ENCODE measurements at regions of chr2 and their contacts with region 1.

Region 1: DNA sequence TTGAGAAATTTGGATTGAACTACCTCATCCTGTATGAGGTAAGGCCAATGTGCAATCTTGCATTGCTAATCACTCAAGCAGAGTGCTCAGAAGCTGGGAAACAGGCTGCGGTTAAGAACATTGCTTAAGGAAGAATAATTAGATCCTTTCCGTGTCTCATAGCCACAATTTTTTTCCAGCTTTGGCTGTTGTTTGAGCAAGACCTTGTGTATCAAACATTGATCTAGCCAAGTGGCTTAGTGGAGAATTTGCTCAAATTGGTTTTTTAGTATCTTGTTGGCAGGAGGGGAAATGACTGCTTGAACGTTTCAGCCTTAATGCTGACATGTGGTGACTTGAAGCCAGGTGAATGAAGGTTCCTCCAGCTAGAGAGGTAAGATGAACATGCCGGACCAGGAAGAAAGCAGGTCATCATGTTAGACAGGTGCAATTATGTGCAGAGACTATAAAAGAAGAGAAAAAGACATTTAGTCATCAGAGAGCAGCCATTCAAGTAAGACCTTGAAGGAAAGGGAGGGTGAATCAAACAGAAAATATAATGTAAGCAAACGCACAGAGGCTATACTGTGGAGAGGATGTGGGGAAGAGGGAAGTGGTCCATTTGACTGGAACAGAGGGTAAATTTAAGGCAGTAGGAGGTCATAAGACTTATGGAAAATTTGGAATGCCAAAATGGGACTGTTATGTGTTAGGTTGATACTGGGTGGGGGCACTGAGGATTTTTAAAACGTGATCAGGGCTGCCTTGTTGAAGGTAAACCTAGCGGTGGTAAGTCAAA is 98.9 kb upstream of the CYP1B1 start:
- DNase-seq: peak; percentile 96
- H3K4me3 ChIP-seq: no peak overlapping the region
- H3K27ac ChIP-seq: no peak overlapping the region
- H3K4me1 ChIP-seq: peaks cover 38% of the 10 kb centered on the region
- H3K27me3 ChIP-seq: no peaks in the 10 kb centered on the region
- CTCF ChIP-seq: no peak

Region 2: DNA sequence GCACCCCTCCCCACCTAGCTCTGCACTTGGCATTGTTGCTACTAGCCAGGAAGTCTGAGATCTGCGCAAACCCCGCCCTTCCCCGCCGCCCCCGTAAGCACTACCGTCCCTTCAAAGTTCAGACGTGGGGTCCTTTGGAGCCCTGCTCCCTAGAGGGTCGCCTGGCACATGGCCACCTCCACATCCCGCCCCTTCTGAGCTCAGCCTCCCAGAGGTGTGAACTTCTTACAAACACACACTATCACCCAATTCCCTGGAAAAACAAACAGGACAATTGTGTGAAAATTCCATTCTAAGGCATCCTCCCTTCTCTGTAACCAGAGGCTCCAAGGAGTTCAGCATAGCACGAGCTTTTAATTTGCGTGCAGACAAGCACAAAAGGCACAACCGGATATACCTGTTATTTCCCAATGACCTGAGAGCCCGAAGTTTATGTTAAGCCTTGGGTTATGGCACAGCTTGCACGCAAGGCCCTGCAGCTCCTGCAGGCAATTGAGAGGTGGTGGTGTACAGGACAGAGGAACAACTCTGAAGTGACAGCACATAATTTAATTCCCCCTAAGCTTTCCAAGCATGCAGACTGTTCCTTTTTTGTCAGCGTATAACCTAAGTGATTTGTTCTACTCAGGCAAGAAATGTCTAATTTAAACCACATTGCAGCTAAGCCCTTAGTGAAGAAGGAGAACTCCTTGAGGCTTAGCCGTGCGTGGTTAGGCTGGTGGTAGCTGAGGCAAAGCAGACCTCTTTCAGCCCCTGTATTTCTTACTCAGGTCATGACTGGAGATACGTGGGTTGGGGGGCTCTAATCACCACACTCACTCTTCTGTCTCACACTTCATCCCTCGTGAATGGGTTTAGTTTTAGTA is 78.6 kb before region 1 on chr2:
- CTCF ChIA-PET with region 1: no interaction called
- dilution Hi-C with region 1: loop called (anchors 5 kb)
- in situ Hi-C with region 1: no loop called
- intact Hi-C with region 1: no loop called
- DNase-seq: peak; percentile 89
- H3K4me3 ChIP-seq: no peak overlapping the region
- H3K27ac ChIP-seq: peak overlapping the region; percentile 85
- H3K4me1 ChIP-seq: peaks cover 57% of the 10 kb centered on the region
- H3K27me3 ChIP-seq: no peaks in the 10 kb centered on the region
- CTCF ChIP-seq: no peak

Region 3: GRCh38 chr2:38146275-38146906 is 28.4 kb before region 1 on chr2:
- CTCF ChIA-PET with region 1: no interaction called
- dilution Hi-C with region 1: no loop called
- in situ Hi-C with region 1: no loop called
- intact Hi-C with region 1: loop called (anchors 1 kb)
- DNase-seq: peak; percentile 90
- H3K4me3 ChIP-seq: peak overlapping the region in 1 of 3 experiments; percentile 30
- H3K27ac ChIP-seq: peak overlapping the region; percentile 98
- H3K4me1 ChIP-seq: peaks cover 40% of the 10 kb centered on the region
- H3K27me3 ChIP-seq: no peaks in the 10 kb centered on the region
- CTCF ChIP-seq: no peak

Region 4: DNA sequence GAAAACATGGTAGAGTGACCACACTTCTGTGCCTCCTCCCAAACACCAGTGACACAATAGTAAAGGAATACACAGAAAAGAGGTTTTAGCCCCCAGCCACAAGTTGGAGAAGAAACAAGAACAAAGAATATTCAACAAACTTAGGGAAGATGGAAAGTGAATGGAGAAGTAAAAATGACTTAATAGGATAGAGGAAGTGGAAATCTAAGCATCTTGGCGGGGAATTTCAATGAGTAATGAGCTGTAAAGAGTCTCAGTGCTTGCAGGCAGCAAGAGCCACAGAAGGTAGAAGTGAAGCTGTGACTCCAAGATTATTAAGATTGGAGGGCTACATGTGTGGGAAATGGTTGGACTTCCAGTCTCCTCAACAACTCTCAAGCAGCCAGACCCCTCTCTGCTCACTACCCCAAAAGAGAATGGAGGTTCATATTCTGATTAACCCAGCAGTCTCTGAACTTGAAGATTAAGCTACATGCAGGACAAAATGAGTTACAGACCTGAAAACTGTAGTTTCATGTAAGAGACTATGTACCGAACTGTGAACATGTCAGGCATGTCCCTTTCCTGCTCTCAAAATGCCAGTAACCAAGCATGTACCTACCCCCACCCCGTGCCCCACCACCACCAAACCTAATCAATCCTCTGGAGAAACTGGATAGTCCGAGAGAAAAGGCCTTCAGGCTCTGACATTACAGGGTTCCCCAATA is 444.8 kb after region 1 on chr2:
- CTCF ChIA-PET with region 1: no interaction called
- dilution Hi-C with region 1: no loop called
- in situ Hi-C with region 1: no loop called
- intact Hi-C with region 1: no loop called
- DNase-seq: peak; percentile 35
- H3K4me3 ChIP-seq: no peak overlapping the region
- H3K27ac ChIP-seq: no peak overlapping the region
- H3K4me1 ChIP-seq: peaks cover 19% of the 10 kb centered on the region
- H3K27me3 ChIP-seq: no peaks in the 10 kb centered on the region
- CTCF ChIP-seq: no peak

Measured in mammary epithelial cell (primary cell).